AG04449 (cell line): ENCODE measurements at regions of chr9 and their contacts with region 1.

Region 1: DNA sequence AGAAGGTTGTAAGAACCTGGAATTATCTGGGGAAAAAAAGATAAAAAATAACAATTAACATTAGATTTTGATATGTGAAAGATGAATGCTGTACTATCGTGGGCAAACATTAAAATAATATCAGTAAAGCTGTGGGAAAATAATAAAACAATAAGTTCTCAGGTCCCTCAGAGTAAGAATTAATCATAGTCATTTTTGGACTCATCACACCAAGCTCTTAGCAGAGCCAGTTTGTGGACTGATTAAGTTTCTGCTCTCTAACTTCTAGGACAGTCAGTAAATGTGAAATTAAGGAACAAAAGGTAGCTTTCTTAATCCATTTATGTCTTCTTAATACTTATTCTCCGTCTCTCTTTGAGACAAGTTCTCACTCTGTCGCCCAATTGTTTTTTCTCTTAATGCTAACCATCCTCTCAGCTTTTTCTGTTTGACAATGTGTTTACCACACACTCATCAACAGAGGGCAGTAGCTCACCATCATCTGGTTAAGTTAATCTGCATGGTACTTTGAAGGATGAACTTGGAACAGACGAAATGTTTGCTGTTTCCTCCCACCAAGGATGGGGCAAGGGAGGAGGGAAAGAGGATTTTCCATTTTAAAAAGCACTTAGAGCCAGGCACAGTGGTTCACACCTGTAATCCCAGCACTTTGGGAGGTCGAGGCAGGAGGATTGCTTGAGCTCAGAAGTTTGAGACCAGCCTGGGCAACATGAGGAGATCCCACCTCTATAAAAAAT is 5.3 kb upstream of the ACO1 start:
- DNase-seq: no peak
- H3K4me3 ChIP-seq: no peak overlapping the region
- CTCF ChIP-seq: peak; percentile 79

Region 2: GRCh38 chr9:31996322-31996721 is 382.8 kb before region 1 on chr9:
- CTCF ChIA-PET with region 1: no interaction called
- POLR2A ChIA-PET with region 1: no interaction called
- DNase-seq: no peak
- H3K4me3 ChIP-seq: no peak overlapping the region
- CTCF ChIP-seq: no peak

Region 3: GRCh38 chr9:32334100-32334499 is 45.1 kb before region 1 on chr9:
- CTCF ChIA-PET with region 1: no interaction called
- POLR2A ChIA-PET with region 1: no interaction called
- DNase-seq: no peak
- H3K4me3 ChIP-seq: no peak overlapping the region
- CTCF ChIP-seq: no peak

Region 4: DNA sequence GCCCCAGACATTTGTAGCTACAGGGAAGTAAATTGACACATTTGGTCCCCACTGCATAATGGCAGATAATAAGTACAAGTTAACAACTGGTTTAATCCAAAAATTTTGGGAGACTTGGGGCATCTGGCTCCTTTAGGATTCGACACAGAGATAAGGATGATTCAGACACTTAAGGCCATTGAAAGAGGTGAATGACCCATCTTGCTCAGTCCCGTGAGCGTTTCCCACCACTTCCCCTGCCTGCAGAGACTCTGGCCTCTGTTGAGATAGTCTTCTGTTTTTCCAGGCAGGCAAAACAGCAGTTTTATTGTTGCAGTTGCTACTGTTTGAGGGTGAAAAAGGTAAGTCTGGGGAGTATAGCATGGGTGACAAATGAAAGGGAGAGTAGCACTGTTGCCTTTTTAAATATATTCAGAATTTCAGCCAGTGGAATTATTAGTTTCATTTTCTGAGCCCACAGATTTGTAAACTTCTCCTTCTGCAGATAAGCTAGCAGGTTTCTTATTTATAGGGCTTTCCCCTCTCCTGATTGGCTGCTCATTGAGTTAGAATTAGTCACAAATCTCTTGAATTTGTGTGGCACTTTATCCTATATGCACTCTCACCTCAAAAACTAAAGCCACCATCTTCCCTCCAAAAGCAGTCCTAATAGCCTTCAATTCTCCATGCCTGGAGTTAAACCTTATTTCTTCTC is 24.6 kb after region 1 on chr9:
- CTCF ChIA-PET with region 1: interaction called, 32 read pairs
- POLR2A ChIA-PET with region 1: interaction called, 3 read pairs
- DNase-seq: no peak
- H3K4me3 ChIP-seq: no peak overlapping the region
- CTCF ChIP-seq: no peak

Region 5: DNA sequence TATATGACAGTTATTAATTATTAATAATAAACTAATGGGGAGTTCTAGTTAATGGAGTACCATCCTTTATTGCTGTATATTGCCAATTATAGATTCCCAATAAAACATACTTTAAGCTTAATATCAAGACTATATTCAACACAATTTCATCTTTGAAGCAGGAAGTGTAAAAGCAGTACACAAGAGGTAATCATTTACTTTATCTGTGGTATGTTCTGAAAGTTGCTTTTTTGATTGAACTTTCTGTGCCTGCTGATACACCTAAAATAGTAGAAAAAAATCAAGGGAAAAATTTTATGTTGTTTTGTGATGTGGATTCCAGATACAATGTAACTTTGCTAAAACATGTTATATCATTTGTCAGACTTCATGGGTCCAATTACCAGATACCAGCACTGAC is 63.3 kb after region 1 on chr9:
- CTCF ChIA-PET with region 1: interaction called, 233 read pairs
- POLR2A ChIA-PET with region 1: no interaction called
- DNase-seq: no peak
- H3K4me3 ChIP-seq: no peak overlapping the region
- CTCF ChIP-seq: no peak

Region 6: GRCh38 chr9:32550562-32551433 is 171.6 kb after region 1 on chr9:
- CTCF ChIA-PET with region 1: interaction called, 94 read pairs
- POLR2A ChIA-PET with region 1: interaction called, 9 read pairs
- DNase-seq: peak; percentile 45
- H3K4me3 ChIP-seq: peak overlapping the region; percentile 82
- CTCF ChIP-seq: peak; percentile 4

Region 7: DNA sequence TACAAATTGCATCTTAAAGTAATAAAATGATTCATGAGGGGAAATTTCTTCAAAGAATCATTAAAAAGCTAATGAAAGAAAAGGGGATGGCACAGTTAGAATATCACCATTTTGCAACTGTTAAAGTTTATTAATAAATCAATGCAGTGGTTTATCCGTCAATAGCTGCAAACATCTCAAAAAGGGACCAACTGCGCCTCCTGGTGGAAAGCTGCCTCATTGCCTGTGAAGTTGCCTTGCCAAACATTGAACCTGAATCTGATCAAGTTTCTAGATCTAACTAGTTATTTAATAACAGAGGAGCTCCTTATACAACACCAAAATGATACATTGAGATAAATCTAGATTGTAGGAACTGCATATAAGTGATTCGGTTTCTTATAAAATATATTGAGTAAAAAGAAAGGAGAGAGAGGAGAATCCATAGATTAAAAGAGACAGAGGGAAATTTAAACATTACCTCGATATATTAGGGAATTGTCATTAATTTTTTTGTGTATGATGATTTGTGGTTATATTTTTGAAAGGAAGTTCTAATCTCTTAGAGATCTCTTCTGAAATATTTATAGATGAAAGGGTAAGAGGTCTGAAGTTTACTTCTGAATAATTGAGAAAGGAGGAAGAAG is 200.7 kb after region 1 on chr9:
- CTCF ChIA-PET with region 1: interaction called, 1,093 read pairs
- POLR2A ChIA-PET with region 1: interaction called, 6 read pairs
- DNase-seq: no peak
- H3K4me3 ChIP-seq: no peak overlapping the region
- CTCF ChIP-seq: peak; percentile 88